Dorsolateral prefrontal cortex (tissue), 120 donors: ENCODE measurements at regions of chr1 and their contacts with region 1.

Region 1: GRCh38 chr1:36450270-36450918 is at the start of gene OSCP1:
- DNase-seq: peak; percentile 87 to 97 (median 92)
- H3K4me3 ChIP-seq: peak within 1 kb of the TSS; percentile 49 to 98 (median 79)
- H3K27ac ChIP-seq: peak within 1 kb of the TSS; percentile 70 to 98 (median 93)
- H3K27me3 ChIP-seq: no peaks in the 10 kb centered on the region
- CTCF ChIP-seq: peak in 7 of 56 donors; percentile 8 to 21 (median 11)
- total RNA-seq, gene OSCP1: 17.0 to 49.3 (median 30.6) TPM

Region 2: GRCh38 chr1:36385410-36386257 is 64.8 kb before region 1 on chr1 and contains the start of gene STK40:
- intact Hi-C with region 1: loop called in 1 of 2 experiments (anchors 5 kb)
- DNase-seq: peak; percentile 95 to 99 (median 98)
- H3K4me3 ChIP-seq: peak within 1 kb of the TSS; percentile 80 to 100 (median 95)
- H3K27ac ChIP-seq: peak within 1 kb of the TSS; percentile 70 to 99 (median 96)
- H3K27me3 ChIP-seq: no peaks in the 10 kb centered on the region
- CTCF ChIP-seq: peak in 16 of 56 donors; percentile 6 to 47 (median 14)
- total RNA-seq, gene STK40: 17.4 to 52.5 (median 29.0) TPM

Region 3: DNA sequence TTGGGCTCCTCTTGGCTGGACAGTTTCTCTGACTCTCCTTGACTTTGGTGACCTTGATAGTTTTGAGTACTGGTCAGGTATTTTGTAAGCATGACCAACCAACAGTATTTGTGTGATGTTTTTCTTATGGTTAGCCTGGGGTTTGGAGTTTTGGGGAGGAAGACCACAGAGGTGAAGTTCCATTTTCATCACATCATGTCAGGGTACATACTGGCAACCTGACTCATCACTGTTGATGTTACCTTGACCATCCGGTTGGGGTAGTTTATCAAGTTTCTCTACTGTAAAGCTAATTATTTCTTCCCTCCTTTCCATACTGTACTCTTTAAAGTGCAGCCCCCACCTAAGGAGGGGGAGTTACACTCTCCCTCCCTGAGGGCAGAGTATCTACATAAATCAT is 13.6 kb before region 1 on chr1:
- intact Hi-C with region 1: no loop called
- DNase-seq: no peak
- H3K4me3 ChIP-seq: no peak overlapping the region
- H3K27ac ChIP-seq: no peak overlapping the region
- H3K27me3 ChIP-seq: no peaks in the 10 kb centered on the region
- CTCF ChIP-seq: no peak